ENCODE measurements at regions of chr15 and their contacts with region 1.

Region 1: GRCh38 chr15:33994005-33994615 is 25.8 kb downstream of the CHRM5 start:
- DNase-seq: peak; percentile 54
- H3K4me3 ChIP-seq: no peak overlapping the region
- H3K27ac ChIP-seq: no peak overlapping the region
- H3K27me3 ChIP-seq: no peaks in the 10 kb centered on the region
- CTCF ChIP-seq: peak; percentile 70

Region 2: GRCh38 chr15:33737687-33738601 is 256.2 kb before region 1 on chr15:
- in situ Hi-C with region 1: loop called (anchors 25 kb)
- DNase-seq: peak; percentile 9
- H3K4me3 ChIP-seq: no peak overlapping the region
- H3K27ac ChIP-seq: no peak overlapping the region
- H3K27me3 ChIP-seq: no peaks in the 10 kb centered on the region
- CTCF ChIP-seq: peak; percentile 87